Activated CD4-positive, alpha-beta T cell treated with anti-CD3 and anti-CD28 coated beads, Interleukin-2, amount 10 ng/mL, durations not matched to agents 24 days and 14 days (primary cell): ENCODE measurements at regions of chr18 and their contacts with region 1.

Region 1: GRCh38 chr18:48663931-48664847 is 125.4 kb downstream of the CTIF start:
- DNase-seq: peak; percentile 87
- H3K4me3 Mint-ChIP-seq: no peak overlapping the region
- H3K27ac Mint-ChIP-seq: no peak overlapping the region
- H3K4me1 Mint-ChIP-seq: no peaks in the 10 kb centered on the region
- H3K27me3 Mint-ChIP-seq: peaks cover 4% of the 10 kb centered on the region

Region 2: GRCh38 chr18:48124857-48125626 is 539.1 kb before region 1 on chr18:
- intact Hi-C with region 1: no loop called
- DNase-seq: peak; percentile 79
- H3K4me3 Mint-ChIP-seq: peak overlapping the region; percentile 10
- H3K27ac Mint-ChIP-seq: peak overlapping the region; percentile 51
- H3K4me1 Mint-ChIP-seq: peaks cover 22% of the 10 kb centered on the region
- H3K27me3 Mint-ChIP-seq: peaks cover 28% of the 10 kb centered on the region

Region 3: DNA sequence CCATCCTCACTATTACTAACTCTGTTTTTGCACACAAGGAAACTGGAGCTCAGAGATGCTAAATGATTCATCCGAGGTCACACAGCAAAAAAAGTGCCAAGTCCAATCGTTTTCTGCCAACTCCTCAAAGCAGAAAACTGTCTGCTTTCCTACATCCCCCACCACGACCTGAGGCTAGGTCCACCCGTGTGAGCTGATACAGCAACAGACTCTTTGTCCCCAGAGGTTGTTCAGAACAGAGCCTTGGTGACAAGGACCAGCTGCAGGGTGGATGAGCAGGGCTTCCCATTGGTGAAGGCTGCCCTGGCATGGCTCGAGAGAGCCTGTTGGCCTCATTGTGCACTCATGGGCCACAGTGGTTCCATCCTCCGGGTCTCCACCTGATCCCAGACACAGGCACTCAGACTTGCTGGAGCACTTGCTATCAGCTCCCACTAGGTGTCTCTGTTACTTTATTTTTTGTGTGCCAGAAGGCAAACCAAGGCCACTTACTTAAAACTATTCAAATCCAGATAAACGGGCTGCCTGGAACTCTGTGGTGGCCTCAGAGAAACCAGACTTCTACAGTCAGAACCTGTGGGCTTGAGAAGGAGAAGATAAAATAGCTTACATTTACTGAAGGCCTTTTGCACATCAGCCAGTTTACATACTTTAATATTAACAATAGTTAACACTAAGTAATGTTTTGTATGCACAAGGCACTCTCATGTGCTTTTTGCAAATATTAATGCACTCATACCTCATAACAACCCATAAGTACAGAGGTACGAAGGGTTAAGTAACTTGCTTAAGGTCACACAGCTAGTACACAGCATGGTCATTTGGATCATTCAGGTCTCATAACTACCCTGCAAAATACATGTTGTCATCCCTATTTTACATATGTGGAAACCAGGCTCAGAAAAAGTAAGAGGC is 188.3 kb before region 1 on chr18:
- intact Hi-C with region 1: loop called (anchors 1 kb)
- DNase-seq: peak; percentile 79
- H3K4me3 Mint-ChIP-seq: no peak overlapping the region
- H3K27ac Mint-ChIP-seq: no peak overlapping the region
- H3K4me1 Mint-ChIP-seq: no peaks in the 10 kb centered on the region
- H3K27me3 Mint-ChIP-seq: peaks cover 39% of the 10 kb centered on the region